ENCODE measurements at regions of chr1 and their contacts with region 1.

Region 1: GRCh38 chr1:234309598-234310459 is 63.4 kb upstream of the COA6 start:
- DNase-seq: peak; percentile 50
- ATAC-seq: peak; percentile 68
- H3K4me3 ChIP-seq: peak overlapping the region; percentile 22 to 51 (median 28); a peak in 3 of 6 replicates
- H3K27ac ChIP-seq: no peak overlapping the region
- H3K4me1 ChIP-seq: peaks cover 47% of the 10 kb centered on the region
- H3K27me3 ChIP-seq: no peaks in the 10 kb centered on the region
- CTCF ChIP-seq: peak; percentile 86
- EP300 ChIP-seq: no peak
- POLR2A ChIP-seq: no peak
- RAD21 ChIP-seq: peak; percentile 73

Region 2: DNA sequence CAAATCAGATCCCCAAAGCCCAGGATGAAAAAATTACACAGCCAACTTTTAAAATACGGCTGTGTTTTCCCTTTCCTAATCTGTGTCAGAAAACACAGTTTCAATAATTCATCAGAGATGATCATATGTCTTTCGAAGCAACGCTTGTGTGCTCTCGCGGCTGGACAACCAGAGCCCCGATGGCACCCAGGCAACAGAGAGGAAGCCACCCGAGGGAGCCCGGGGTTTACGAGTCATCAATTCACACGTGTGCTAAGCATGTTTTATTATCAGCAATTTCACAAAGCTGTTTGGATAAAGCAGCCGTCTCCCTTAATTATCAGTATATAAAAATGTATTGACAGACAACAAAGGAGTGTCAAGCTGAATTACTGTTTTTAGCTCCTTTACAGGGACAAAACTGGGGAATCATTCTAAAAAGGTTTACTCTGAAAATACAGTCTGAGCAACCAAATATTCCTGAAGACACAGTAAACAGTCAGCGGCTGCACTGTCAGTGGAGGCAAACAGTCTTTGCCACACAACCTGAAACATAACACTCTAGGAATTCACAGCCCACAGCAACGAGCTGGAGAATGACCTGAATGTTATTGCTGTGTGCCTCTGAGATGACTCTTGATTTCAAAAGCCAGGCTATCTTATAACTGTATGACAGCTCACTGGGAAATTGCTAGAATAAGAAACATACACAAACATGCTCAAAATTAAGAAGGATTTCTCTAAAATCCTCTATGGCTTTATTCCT is 1880.9 kb before region 1 on chr1:
- CTCF ChIA-PET with region 1: no interaction called
- POLR2A ChIA-PET with region 1: no interaction called
- in situ Hi-C with region 1: no loop called
- intact Hi-C with region 1: no loop called
- DNase-seq: no peak
- ATAC-seq: no peak
- H3K4me3 ChIP-seq: no peak overlapping the region
- H3K27ac ChIP-seq: no peak overlapping the region
- H3K4me1 ChIP-seq: no peaks in the 10 kb centered on the region
- H3K27me3 ChIP-seq: peaks cover 1 to 6% of the 10 kb centered on the region in 2 experiments; a peak in 2 of 5 replicates
- CTCF ChIP-seq: no peak
- EP300 ChIP-seq: no peak
- POLR2A ChIP-seq: no peak
- RAD21 ChIP-seq: no peak

Region 3: DNA sequence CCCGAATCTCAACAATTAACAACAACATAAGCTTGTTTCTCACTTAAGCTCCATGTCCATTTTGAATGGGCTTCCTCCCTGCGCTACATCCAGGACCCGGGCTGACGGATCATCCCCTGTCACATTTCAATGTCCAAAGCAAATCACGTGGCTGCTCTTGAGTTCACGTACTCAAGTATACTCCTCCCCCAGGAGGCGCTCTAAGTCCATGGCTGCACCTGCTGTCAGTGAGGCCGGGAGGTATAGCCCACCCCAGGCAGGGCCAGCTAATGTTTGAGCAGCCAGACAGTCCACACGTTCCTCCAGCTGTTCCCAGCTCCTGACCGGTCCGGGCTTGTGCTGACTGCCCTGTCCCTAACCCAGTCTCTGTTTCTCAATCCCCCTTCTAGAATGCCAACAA is 184.5 kb before region 1 on chr1:
- CTCF ChIA-PET with region 1: no interaction called
- POLR2A ChIA-PET with region 1: interaction called, 3 read pairs
- in situ Hi-C with region 1: loop called (anchors 25 kb)
- intact Hi-C with region 1: loop called (anchors 1 kb)
- DNase-seq: peak; percentile 59
- ATAC-seq: peak; percentile 99
- H3K4me3 ChIP-seq: no peak overlapping the region; a peak in 1 of 6 replicates
- H3K27ac ChIP-seq: no peak overlapping the region
- H3K4me1 ChIP-seq: no peaks in the 10 kb centered on the region
- H3K27me3 ChIP-seq: peaks cover 0 to 4% of the 10 kb centered on the region in 2 experiments; a peak in 1 of 5 replicates
- CTCF ChIP-seq: peak; percentile 88
- EP300 ChIP-seq: no peak
- POLR2A ChIP-seq: no peak
- RAD21 ChIP-seq: peak; percentile 53; the same call in 1 of the 2 replicates

Region 4: GRCh38 chr1:234212764-234213657 is 96.8 kb before region 1 on chr1:
- CTCF ChIA-PET with region 1: interaction called, 5 read pairs
- POLR2A ChIA-PET with region 1: interaction called, 3 read pairs
- in situ Hi-C with region 1: no loop called
- intact Hi-C with region 1: loop called (anchors 1 kb)
- DNase-seq: peak; percentile 53
- ATAC-seq: peak; percentile 57
- H3K4me3 ChIP-seq: no peak overlapping the region
- H3K27ac ChIP-seq: no peak overlapping the region
- H3K4me1 ChIP-seq: peaks cover 14% of the 10 kb centered on the region; the same call in 1 of the 2 replicates
- H3K27me3 ChIP-seq: peaks cover 1 to 38% of the 10 kb centered on the region in 2 experiments; a peak in 3 of 5 replicates
- CTCF ChIP-seq: peak; percentile 69
- EP300 ChIP-seq: no peak
- POLR2A ChIP-seq: no peak
- RAD21 ChIP-seq: no peak

Region 5: GRCh38 chr1:234326497-234327366 is 16.9 kb after region 1 on chr1:
- CTCF ChIA-PET with region 1: interaction called, 3 read pairs
- POLR2A ChIA-PET with region 1: interaction called, 20 read pairs
- in situ Hi-C with region 1: no loop called
- intact Hi-C with region 1: loop called (anchors 1 kb)
- DNase-seq: peak; percentile 24
- ATAC-seq: peak; percentile 57
- H3K4me3 ChIP-seq: no peak overlapping the region
- H3K27ac ChIP-seq: peak overlapping the region; percentile 76
- H3K4me1 ChIP-seq: peaks cover 53% of the 10 kb centered on the region
- H3K27me3 ChIP-seq: no peaks in the 10 kb centered on the region; a peak in 1 of 5 replicates
- CTCF ChIP-seq: peak; percentile 64
- EP300 ChIP-seq: no peak
- POLR2A ChIP-seq: no peak
- RAD21 ChIP-seq: peak; percentile 62

Measured in HepG2 (cell line).